ENCODE measurements at regions of chr13 and their contacts with region 1.

Region 1: DNA sequence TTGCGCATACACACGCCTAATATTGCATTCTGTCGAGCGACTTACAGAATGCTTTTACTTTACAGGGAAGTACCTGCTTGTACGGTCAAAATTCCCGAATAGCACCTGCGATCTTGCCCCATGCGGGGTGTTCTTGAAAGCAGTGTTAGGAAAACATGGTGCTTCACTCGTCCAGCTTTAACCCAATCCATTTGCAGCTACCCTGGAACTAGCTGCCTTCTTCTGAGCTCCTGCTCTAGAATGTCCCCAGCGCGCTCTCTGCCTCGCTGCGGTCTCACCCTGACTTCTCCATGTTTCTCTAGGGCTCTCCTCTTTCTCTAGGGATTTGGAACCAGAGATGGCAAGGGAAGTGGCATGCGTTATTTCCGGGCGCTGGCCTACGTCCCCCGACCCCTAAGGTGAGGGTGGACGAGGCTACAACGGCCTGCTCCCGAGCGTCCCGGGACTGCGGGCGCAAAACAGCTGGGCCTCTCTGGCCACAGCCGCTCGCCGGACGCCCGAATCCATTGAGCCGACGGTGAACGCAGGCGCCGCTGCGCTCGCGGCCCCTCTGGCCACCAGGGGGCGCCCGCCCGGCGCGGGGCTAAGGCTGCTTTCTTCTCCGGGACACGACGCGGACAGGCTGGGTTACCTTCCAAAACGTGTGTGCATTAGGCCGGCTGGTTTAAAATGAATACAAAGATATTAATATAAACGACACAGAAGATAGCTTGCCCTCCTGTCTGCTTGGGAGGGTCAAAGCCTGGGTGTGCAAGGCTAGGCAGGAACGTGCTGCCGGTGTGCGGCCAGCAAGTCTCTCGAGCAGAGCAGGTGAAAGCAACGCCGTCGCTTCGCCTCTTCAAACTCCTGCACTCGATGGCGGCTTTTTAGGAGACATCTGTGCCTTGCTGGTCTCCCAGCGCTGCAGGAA is 1.8 kb upstream of the SPRY2 start:
- DNase-seq: peak; percentile 66 to 95 (median 88)

Region 2: GRCh38 chr13:79936368-79937136 is 406.2 kb before region 1 on chr13:
- intact Hi-C with region 1: loop called (anchors 5 kb)
- DNase-seq: peak in 41 of 42 donors; percentile 28 to 92 (median 76)

Region 3: GRCh38 chr13:80012251-80012650 is 330.5 kb before region 1 on chr13:
- intact Hi-C with region 1: loop called (anchors 10 kb)
- DNase-seq: peak in 1 of 42 donors; percentile 12

Region 4: DNA sequence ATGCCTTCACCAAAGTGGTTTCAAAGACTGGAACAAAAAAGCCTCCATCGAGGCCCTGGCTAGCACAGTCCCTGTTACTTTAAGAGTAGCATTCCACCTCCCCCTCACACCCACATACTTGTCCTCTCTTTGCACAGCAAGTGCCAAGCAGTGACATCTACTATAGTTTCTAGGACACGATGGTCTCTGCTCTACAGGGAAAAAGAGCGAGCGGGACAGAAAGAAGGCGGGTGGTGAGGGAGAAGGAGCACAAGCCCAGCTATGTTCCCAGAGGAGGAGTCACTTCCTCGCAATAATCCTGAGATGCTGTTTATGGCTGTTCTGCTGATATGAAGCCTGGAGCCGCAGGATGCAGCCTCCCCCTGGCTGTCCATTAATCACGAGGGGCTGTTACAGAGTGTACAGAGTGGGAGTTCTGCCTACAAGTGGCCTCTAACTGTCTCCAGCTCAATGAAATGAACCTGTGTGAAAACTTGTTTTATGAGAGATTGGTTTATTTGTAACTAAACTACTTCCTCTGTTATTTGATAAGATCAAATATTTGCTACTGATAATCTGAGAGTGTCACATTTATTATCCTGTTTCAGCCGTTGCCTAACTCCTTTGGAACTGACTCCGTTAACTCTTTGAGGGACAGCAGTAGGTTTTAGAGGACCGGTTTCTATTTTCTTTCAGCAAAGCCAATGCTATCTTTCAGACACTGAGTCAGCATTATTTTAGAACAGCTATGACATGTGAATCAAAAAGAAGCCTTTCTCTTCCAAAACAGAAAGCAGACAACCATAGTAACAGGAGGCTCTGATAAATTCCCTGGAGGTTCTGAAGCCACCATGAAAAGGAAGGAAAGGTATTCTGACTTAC is 209.8 kb before region 1 on chr13:
- intact Hi-C with region 1: loop called (anchors 5 kb)
- DNase-seq: peak; percentile 24 to 85 (median 61)